Ascending aorta (tissue), 2 donors: ENCODE measurements at regions of chr12 and their contacts with region 1.

Region 1: GRCh38 chr12:98516184-98516873 is 939 bp downstream of the TMPO start:
- DNase-seq: peak in 1 of 2 donors; percentile 82
- H3K4me3 ChIP-seq: peak overlapping the region; percentile 87 to 91
- H3K27ac ChIP-seq: peak overlapping the region; percentile 91 to 92
- H3K4me1 ChIP-seq: peaks cover 4 to 20% of the 10 kb centered on the region in 2 donors
- H3K27me3 ChIP-seq: no peaks in the 10 kb centered on the region
- CTCF ChIP-seq: peak; percentile 41 to 85 (median 65)

Region 2: GRCh38 chr12:96906849-96907670 is 1609.3 kb before region 1 on chr12 and contains the start of gene NEDD1:
- intact Hi-C with region 1: loop called (anchors 10 kb)
- DNase-seq: peak; percentile 18 to 92
- H3K4me3 ChIP-seq: peak within 1 kb of the TSS; percentile 81 to 89
- H3K27ac ChIP-seq: peak within 1 kb of the TSS; percentile 66 to 82
- H3K4me1 ChIP-seq: peaks cover 0 to 3% of the 10 kb centered on the region in 2 donors
- H3K27me3 ChIP-seq: no peaks in the 10 kb centered on the region
- CTCF ChIP-seq: no peak
- total RNA-seq, gene NEDD1: 31.1 TPM

Region 3: DNA sequence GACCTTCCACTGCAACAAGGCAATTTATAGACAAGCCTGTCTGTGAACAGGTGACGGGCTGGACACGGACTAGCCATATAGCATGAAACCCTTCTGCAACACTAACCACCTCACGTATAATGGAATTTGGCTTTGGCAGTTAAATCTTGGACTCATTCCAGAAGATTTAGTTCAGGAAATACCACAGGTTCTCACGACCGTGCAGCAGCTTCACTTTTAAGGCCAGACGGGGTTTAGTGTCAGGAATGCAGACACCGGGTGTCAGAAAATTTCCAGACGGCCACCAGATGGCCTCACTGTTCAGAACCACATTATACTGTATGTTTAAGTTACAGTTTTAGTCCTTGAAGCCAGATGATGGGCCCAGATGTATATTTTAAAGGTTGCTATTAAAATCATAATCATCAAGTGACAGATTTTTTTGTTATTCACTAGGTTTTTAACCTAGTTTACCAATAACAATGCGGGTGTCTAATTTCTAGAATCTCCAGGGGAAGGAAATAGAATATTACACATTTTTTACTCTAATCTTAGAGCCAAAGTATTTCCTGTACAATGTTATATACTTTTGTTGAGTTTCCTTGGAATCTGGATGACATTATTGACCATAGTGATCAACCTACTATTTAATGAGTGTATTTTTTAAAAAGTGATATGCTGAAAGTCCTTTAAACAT is 91.5 kb before region 1 on chr12:
- intact Hi-C with region 1: loop called (anchors 1 kb)
- DNase-seq: peak in 1 of 2 donors; percentile 81
- H3K4me3 ChIP-seq: no peak overlapping the region
- H3K27ac ChIP-seq: no peak overlapping the region
- H3K4me1 ChIP-seq: peaks cover 0 to 6% of the 10 kb centered on the region in 2 donors
- H3K27me3 ChIP-seq: no peaks in the 10 kb centered on the region
- CTCF ChIP-seq: peak; percentile 38 to 79 (median 65)

Region 4: GRCh38 chr12:98478606-98479005 is 37.7 kb before region 1 on chr12:
- intact Hi-C with region 1: no loop called
- DNase-seq: no peak
- H3K4me3 ChIP-seq: no peak overlapping the region
- H3K27ac ChIP-seq: no peak overlapping the region
- H3K4me1 ChIP-seq: peaks cover 3 to 4% of the 10 kb centered on the region in 2 donors
- H3K27me3 ChIP-seq: no peaks in the 10 kb centered on the region
- CTCF ChIP-seq: no peak

Region 5: DNA sequence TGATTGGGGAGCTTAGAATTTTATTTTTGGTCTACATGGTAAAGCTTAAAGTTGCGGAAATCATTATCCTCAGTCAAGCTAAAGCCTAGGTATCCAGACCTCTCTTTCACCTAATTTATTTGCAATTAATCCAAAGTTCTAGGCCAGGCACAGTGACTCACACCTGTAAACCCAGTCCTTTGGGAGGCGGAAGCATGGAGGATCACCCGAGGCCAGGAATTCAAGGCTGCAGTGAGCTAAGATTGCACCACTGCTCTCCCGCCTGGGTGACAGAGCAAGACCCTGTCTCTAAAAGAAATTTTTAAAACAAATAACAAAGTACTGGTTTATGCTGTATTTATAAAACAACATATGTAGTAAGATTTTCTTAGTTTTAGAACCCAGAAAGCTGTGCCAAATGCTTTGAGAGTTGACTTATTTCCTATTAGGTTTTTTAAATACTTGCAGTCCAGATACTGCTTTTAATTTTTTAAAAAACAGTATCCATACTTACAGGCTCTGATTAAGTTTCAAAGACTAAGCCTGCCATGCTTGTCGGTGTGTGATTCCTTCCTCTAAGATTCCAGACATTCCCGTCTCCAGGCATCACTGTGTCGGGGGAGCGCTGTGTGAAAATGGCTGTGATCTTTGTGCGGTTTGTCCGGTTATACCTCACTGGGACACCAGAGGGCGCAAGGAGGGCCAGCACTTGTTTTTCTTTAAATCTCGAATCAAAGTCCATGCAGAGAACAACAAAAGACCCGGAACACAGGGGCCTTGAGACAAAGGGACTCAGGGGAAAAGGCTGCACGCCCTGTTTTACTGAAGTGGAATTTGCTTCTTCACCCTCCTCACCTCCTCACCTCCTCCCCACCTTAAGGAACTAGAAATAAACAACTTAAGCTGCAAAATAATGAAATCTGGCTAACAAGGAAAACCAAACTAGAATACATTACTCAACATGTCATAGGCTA is 25.6 kb before region 1 on chr12:
- intact Hi-C with region 1: loop called (anchors 1 kb)
- DNase-seq: peak; percentile 32 to 94
- H3K4me3 ChIP-seq: peak overlapping the region; percentile 9 to 28
- H3K27ac ChIP-seq: peak overlapping the region; percentile 59 to 60
- H3K4me1 ChIP-seq: peaks cover 0 to 2% of the 10 kb centered on the region in 2 donors
- H3K27me3 ChIP-seq: no peaks in the 10 kb centered on the region
- CTCF ChIP-seq: peak; percentile 82 to 87 (median 83)

Region 6: DNA sequence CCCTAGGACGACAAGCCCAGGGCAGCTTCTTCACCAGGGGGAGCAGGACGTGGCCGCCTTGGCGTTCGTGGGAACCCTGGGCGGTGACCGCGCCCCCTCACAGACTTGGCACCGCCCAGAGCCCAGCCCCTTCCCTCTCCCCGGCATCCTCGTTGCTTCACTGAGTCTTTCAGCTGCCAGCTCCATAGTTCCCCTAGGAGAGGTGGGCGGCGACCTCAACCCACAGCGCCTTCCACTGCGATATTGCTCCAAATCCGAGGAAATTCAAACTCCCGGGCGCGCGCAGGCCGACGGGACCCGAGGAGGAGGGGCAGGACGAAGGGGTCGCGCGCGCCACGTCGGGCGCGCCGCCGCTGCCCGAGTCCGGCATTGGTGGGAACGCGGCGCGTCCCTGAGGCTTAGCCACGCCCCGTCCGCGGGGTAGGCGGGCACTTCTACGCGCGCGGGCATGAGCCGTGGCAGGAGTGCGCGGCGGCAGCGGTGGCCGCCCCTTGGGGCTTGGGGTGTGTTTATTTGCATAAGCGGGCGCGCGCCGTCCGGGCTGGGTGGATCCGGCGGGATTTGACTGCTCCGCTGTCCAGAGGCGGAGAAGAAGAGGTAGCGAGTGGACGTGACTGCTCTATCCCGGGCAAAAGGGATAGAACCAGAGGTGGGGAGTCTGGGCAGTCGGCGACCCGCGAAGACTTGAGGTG is 128.5 kb after region 1 on chr12 and contains the starts of genes APAF1 and IKBIP:
- intact Hi-C with region 1: loop called (anchors 2 kb)
- DNase-seq: peak; percentile 93 to 99
- H3K4me3 ChIP-seq: peak within 1 kb of the TSS; percentile 75 to 98
- H3K27ac ChIP-seq: peak within 1 kb of the TSS; percentile 72 to 85
- H3K4me1 ChIP-seq: peaks cover 3 to 7% of the 10 kb centered on the region in 2 donors
- H3K27me3 ChIP-seq: no peaks in the 10 kb centered on the region
- CTCF ChIP-seq: no peak
- total RNA-seq, gene APAF1: 15.5 TPM
- total RNA-seq, gene IKBIP: 12.3 TPM

Region 7: DNA sequence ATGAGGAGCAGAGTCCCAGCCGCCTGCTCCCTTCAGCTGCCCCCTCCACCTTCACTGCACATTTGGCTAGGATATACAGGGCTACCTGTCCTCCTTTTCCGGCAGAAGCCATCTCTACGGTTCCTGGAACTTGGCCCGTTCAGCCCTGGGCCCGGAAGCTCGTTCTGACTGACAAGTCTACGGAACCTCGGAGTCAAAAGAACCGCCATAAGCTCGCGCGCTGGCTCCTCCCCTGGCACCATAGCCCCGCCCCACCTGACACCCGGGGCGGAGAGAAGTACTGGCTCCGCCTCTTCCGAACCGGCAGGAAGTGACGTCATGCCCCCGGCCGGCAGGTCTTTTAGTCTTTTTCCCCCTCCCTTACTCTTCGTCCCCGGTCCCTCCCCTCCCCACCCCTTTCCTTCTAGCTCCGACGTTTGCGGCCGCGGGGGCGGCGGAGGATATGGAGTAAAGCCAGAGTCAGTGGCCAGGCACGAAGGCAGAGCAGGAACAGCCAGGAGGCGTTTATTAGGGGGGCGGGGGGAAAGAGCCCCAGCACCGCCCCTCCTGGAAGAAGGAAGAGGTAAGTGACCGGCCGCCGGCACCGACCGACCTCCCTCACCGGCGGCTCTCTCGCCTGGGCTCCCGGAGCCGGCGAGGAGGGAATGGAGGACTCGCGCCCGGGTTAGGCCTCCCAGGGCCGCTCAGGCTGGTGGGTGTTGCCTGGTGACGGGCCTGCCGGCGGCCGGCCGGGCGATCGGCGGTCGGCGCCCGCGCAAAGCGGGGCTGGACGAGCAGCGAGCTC is 1750.7 kb after region 1 on chr12 and contains the starts of genes DEPDC4 and SCYL2:
- intact Hi-C with region 1: loop called (anchors 10 kb)
- DNase-seq: peak; percentile 92 to 98
- H3K4me3 ChIP-seq: peak within 1 kb of the TSS; percentile 95 to 100
- H3K27ac ChIP-seq: peak within 1 kb of the TSS; percentile 97 to 98
- H3K4me1 ChIP-seq: peaks cover 0 to 22% of the 10 kb centered on the region in 2 donors
- H3K27me3 ChIP-seq: no peaks in the 10 kb centered on the region
- CTCF ChIP-seq: no peak
- total RNA-seq, gene DEPDC4: not detected
- total RNA-seq, gene SCYL2: 11.6 TPM